ENCODE measurements at regions of chr1 and their contacts with region 1.

Region 1: DNA sequence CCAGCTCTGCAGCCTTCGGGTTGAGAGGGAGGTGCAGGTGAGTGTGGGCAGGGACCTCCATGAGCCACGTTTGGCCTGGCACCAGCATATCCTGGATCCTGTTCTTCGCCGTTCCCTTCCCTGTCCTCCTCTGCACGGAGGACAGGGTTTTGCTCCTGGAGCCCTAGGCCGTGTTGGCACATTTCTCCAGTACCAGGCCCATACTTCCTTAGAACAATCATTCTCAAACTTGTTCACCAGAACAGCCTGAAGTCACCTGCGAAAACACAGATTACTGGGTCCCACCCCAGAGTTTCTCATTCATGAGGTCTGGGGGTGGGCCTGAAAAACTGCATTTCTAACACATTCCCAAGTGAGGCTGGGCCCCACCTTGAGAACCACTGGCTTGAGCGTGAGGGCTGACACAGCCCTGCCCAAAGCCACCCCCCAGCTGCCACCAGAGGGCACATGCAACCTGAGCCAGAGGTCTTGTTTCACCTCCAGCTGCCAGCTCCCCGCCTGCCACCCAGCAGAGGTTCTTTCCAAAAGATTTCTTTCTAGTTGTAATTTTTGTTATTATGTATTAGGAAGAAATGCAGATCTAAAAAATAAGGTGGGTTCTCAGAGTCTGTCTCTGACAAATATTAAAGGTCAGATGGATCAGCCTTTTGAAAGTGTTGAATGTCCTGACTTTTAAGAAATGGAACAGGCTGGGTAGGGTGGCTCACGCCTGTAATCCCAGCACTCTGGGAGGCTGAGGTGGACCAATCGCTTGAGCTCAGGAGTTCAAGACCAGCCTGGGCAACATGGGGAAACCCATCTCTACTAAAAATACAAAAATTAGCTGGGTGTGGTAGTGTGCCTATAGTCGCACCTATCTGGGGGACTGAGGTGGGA is 39.6 kb upstream of the LDLRAP1 start:
- DNase-seq: peak; percentile 84
- ATAC-seq: peak; percentile 92
- H3K4me3 Mint-ChIP-seq: no peak overlapping the region
- H3K27ac Mint-ChIP-seq: no peak overlapping the region
- H3K4me1 Mint-ChIP-seq: peaks cover 33% of the 10 kb centered on the region
- H3K27me3 Mint-ChIP-seq: no peaks in the 10 kb centered on the region

Region 2: GRCh38 chr1:25520446-25521061 is 16.8 kb after region 1 on chr1:
- CTCF ChIA-PET with region 1: interaction called, 39 read pairs
- POLR2A ChIA-PET with region 1: interaction called, 3 read pairs
- intact Hi-C with region 1: loop called in 1 of 2 experiments (anchors 2 kb)
- DNase-seq: peak; percentile 86
- ATAC-seq: peak; percentile 68
- H3K4me3 Mint-ChIP-seq: no peak overlapping the region
- H3K27ac Mint-ChIP-seq: no peak overlapping the region
- H3K4me1 Mint-ChIP-seq: peaks cover 4% of the 10 kb centered on the region
- H3K27me3 Mint-ChIP-seq: no peaks in the 10 kb centered on the region

Region 3: DNA sequence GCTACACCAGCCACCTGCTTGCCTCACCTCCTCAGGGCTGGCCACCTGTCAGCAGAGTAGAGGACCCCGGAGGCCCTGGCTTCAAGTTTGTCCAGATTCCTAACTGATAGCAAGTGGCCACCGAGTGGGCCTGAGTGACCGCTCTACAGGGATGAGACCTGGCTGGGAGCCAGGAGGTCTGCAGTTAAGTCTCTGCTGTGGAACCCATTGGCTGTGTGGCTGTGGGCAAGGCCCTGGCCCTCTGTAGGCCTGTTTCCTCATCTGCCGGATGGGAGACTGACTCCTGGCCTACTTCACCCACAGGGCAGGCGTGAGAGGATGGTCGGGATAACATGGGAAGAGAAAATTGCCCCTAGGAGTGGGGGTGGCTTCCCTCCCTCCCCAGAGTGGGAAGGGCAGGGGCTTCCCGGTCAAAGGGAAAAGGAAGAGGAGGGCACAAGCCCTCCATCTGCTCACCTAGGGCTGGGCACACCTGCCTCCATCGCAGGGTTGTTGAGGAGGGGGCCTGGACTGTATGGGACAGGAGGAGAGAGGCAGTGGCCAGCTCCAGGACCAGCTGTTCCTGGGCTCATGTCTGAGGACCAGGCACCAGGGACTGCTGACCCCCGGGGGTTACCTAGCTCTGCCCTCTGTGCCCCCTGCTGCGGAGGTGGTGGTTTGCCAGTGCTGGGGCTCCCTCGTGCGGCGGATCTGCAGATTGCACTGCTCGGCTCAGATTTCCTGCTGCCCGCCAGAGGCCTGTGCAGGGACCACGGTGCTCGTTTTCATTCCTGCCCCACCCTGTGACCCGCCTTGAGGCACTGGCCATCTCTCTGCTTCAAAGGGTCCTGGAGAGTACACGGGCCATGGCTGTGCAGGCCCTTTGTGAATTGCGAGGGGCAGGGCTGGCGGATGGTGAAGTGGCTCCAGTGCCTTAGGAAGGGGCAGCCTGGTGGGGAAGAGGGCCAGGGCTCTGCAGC is 306.8 kb after region 1 on chr1:
- CTCF ChIA-PET with region 1: interaction called, 14 read pairs
- POLR2A ChIA-PET with region 1: no interaction called
- intact Hi-C with region 1: loop called (anchors 1 to 2 kb)
- DNase-seq: peak; percentile 89
- ATAC-seq: peak; percentile 86
- H3K4me3 Mint-ChIP-seq: no peak overlapping the region
- H3K27ac Mint-ChIP-seq: no peak overlapping the region
- H3K4me1 Mint-ChIP-seq: peaks cover 3% of the 10 kb centered on the region
- H3K27me3 Mint-ChIP-seq: no peaks in the 10 kb centered on the region